Naive thymus-derived CD4-positive, alpha-beta T cell (primary cell): ENCODE measurements at regions of chrX and their contacts with region 1.

Region 1: DNA sequence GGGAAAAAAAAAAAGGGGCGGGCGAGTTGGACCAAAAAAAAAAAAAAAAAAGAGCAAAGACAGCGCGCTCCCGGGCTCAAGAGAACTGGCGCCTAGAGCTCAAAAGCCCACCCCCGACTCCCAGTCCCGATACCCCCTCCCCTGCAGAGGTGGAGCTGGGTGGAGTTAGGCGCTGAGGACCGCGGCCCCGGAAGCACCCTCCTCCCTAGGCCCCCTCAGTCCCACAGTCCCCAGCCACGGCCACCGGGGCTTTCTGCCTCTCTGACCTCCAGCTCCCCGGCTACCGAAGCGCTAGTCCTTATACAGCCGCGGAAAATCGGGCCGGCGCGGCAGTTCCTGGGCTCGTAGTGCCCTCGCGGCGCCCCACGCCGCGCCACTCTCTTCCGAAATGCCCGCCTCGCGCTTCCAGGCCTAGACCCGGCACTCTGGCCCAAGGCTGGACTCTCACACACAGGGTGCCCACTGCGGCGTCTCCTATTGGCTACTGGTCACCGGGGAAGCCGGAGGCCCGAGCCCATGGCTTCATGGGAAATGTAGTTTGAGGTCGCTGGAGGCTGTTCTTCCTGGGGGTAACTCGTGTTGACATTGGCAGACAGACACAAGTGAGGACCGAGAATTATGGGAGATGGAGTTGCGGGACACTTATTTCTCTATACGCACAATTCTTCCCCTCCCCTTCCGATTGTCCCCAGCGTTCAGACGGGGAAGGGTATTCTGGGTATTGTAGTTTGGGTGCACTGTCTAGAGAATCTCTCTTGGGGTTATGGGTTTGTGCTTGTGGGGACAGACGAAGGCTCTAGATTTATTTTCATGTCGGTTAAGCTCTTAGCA is at the start of gene ENOX2:
- DNase-seq: peak; percentile 51 to 90 (median 83)
- ATAC-seq: peak; percentile 98
- H3K4me3 ChIP-seq: peak within 1 kb of the TSS; percentile 79
- H3K4me3 Mint-ChIP-seq: no peak within 1 kb of the TSS
- H3K27ac ChIP-seq: peak within 1 kb of the TSS; percentile 93
- H3K27ac Mint-ChIP-seq: peak within 1 kb of the TSS in 6 of 9 donors; percentile 51 to 91 (median 71)
- H3K4me1 ChIP-seq: peaks cover 0 to 5% of the 10 kb centered on the region in 2 donors
- H3K4me1 Mint-ChIP-seq: peaks cover 5 to 14% (median 12%) of the 10 kb centered on the region in 7 donors
- H3K27me3 ChIP-seq: no peaks in the 10 kb centered on the region
- H3K27me3 Mint-ChIP-seq: no peaks in the 10 kb centered on the region
- total RNA-seq, gene ENOX2: 10.3 to 15.3 (median 12.1) TPM

Region 2: GRCh38 chrX:130086447-130087206 is 816.4 kb before region 1 on chrX:
- CTCF ChIA-PET with region 1: no interaction called
- POLR2A ChIA-PET with region 1: no interaction called
- intact Hi-C with region 1: loop called (anchors 1 to 5 kb)
- DNase-seq: peak in 8 of 9 donors; percentile 64 to 79 (median 74)
- ATAC-seq: peak; percentile 74
- H3K4me3 ChIP-seq: peak overlapping the region; percentile 67
- H3K4me3 Mint-ChIP-seq: peak overlapping the region; percentile 86 to 93 (median 89)
- H3K27ac ChIP-seq: peak overlapping the region; percentile 66
- H3K27ac Mint-ChIP-seq: peak overlapping the region; percentile 76 to 96 (median 91)
- H3K4me1 ChIP-seq: peaks cover 22 to 35% of the 10 kb centered on the region in 2 donors
- H3K4me1 Mint-ChIP-seq: peaks cover 15 to 71% (median 60%) of the 10 kb centered on the region in 7 donors
- H3K27me3 ChIP-seq: no peaks in the 10 kb centered on the region
- H3K27me3 Mint-ChIP-seq: no peaks in the 10 kb centered on the region

Region 3: GRCh38 chrX:130339408-130340222 is 563.4 kb before region 1 on chrX and contains the start of gene SLC25A14:
- CTCF ChIA-PET with region 1: no interaction called
- POLR2A ChIA-PET with region 1: no interaction called
- intact Hi-C with region 1: loop called (anchors 1 kb)
- DNase-seq: peak; percentile 33 to 79 (median 72)
- ATAC-seq: peak; percentile 94
- H3K4me3 ChIP-seq: peak within 1 kb of the TSS; percentile 90
- H3K4me3 Mint-ChIP-seq: peak within 1 kb of the TSS; percentile 89 to 99 (median 94)
- H3K27ac ChIP-seq: peak within 1 kb of the TSS; percentile 68
- H3K27ac Mint-ChIP-seq: peak within 1 kb of the TSS; percentile 80 to 95 (median 90)
- H3K4me1 ChIP-seq: peaks cover 4 to 5% of the 10 kb centered on the region in 2 donors
- H3K4me1 Mint-ChIP-seq: peaks cover 7 to 25% (median 21%) of the 10 kb centered on the region in 7 donors
- H3K27me3 ChIP-seq: no peaks in the 10 kb centered on the region
- H3K27me3 Mint-ChIP-seq: no peaks in the 10 kb centered on the region
- total RNA-seq, gene SLC25A14: 10.7 to 14.3 (median 13.8) TPM

Region 4: GRCh38 chrX:130401415-130402207 is 501.4 kb before region 1 on chrX and contains the start of gene RBMX2:
- CTCF ChIA-PET with region 1: no interaction called
- POLR2A ChIA-PET with region 1: no interaction called
- intact Hi-C with region 1: loop called (anchors 1 kb)
- DNase-seq: peak; percentile 59 to 76 (median 66)
- ATAC-seq: peak; percentile 94
- H3K4me3 ChIP-seq: peak within 1 kb of the TSS; percentile 95
- H3K4me3 Mint-ChIP-seq: peak within 1 kb of the TSS; percentile 83 to 97 (median 94)
- H3K27ac ChIP-seq: peak within 1 kb of the TSS; percentile 79
- H3K27ac Mint-ChIP-seq: peak within 1 kb of the TSS; percentile 80 to 96 (median 94)
- H3K4me1 ChIP-seq: no peaks in the 10 kb centered on the region
- H3K4me1 Mint-ChIP-seq: peaks cover 0 to 28% (median 22%) of the 10 kb centered on the region in 7 donors
- H3K27me3 ChIP-seq: no peaks in the 10 kb centered on the region
- H3K27me3 Mint-ChIP-seq: peaks cover 0 to 11% (median 5%) of the 10 kb centered on the region in 5 donors
- total RNA-seq, gene RBMX2: 15.9 to 31.4 (median 26.4) TPM